Sigmoid colon (tissue), 7 donors: ENCODE measurements at regions of chr5 and their contacts with region 1.

Region 1: GRCh38 chr5:172473427-172473826 is 19.1 kb upstream of the SH3PXD2B start:
- DNase-seq: no peak
- H3K4me3 ChIP-seq: no peak overlapping the region
- H3K27ac ChIP-seq: no peak overlapping the region
- H3K4me1 ChIP-seq: peaks cover 0 to 7% (median 3%) of the 10 kb centered on the region in 4 donors
- H3K27me3 ChIP-seq: no peaks in the 10 kb centered on the region
- CTCF ChIP-seq: no peak
- EP300 ChIP-seq: no peak
- POLR2A ChIP-seq: no peak

Region 2: GRCh38 chr5:172443441-172444109 is 29.9 kb before region 1 on chr5:
- intact Hi-C with region 1: no loop called
- DNase-seq: peak; percentile 97
- H3K4me3 ChIP-seq: no peak overlapping the region
- H3K27ac ChIP-seq: peak overlapping the region; percentile 73 to 95 (median 81)
- H3K4me1 ChIP-seq: peaks cover 0 to 69% (median 64%) of the 10 kb centered on the region in 4 donors
- H3K27me3 ChIP-seq: no peaks in the 10 kb centered on the region
- CTCF ChIP-seq: no peak
- EP300 ChIP-seq: peak in 3 of 4 donors; percentile 41 to 94 (median 80)
- POLR2A ChIP-seq: no peak

Region 3: GRCh38 chr5:172953776-172954675 is 480.6 kb after region 1 on chr5:
- intact Hi-C with region 1: loop called (anchors 5 kb)
- DNase-seq: no peak
- H3K4me3 ChIP-seq: no peak overlapping the region
- H3K27ac ChIP-seq: peak overlapping the region; percentile 32 to 88 (median 76)
- H3K4me1 ChIP-seq: peaks cover 0 to 37% (median 14%) of the 10 kb centered on the region in 4 donors
- H3K27me3 ChIP-seq: no peaks in the 10 kb centered on the region
- CTCF ChIP-seq: no peak
- EP300 ChIP-seq: no peak
- POLR2A ChIP-seq: no peak